ENCODE measurements at regions of chr16 and their contacts with region 1.

Region 1: GRCh38 chr16:67632415-67633172 is 12.3 kb upstream of the CARMIL2 start:
- DNase-seq: no peak
- H3K4me3 ChIP-seq: no peak overlapping the region
- H3K27ac ChIP-seq: no peak overlapping the region
- H3K4me1 ChIP-seq: no peaks in the 10 kb centered on the region
- H3K27me3 ChIP-seq: no peaks in the 10 kb centered on the region
- CTCF ChIP-seq: no peak

Region 2: GRCh38 chr16:67561824-67562525 is 70.6 kb before region 1 on chr16:
- CTCF ChIA-PET with region 1: no interaction called
- dilution Hi-C with region 1: no loop called
- in situ Hi-C with region 1: no loop called
- intact Hi-C with region 1: no loop called
- DNase-seq: peak; percentile 98
- H3K4me3 ChIP-seq: peak overlapping the region; percentile 66 to 90 (median 67)
- H3K27ac ChIP-seq: peak overlapping the region; percentile 60
- H3K4me1 ChIP-seq: peaks cover 20% of the 10 kb centered on the region
- H3K27me3 ChIP-seq: no peaks in the 10 kb centered on the region
- CTCF ChIP-seq: no peak

Region 3: GRCh38 chr16:67598527-67598926 is 34.1 kb before region 1 on chr16:
- CTCF ChIA-PET with region 1: interaction called, 27 read pairs
- dilution Hi-C with region 1: no loop called
- in situ Hi-C with region 1: no loop called
- intact Hi-C with region 1: no loop called
- DNase-seq: no peak
- H3K4me3 ChIP-seq: no peak overlapping the region
- H3K27ac ChIP-seq: no peak overlapping the region
- H3K4me1 ChIP-seq: peaks cover 16% of the 10 kb centered on the region
- H3K27me3 ChIP-seq: no peaks in the 10 kb centered on the region
- CTCF ChIP-seq: no peak